ENCODE measurements at regions of chr1 and their contacts with region 1.

Region 1: GRCh38 chr1:167392200-167392696 is 126.1 kb downstream of the CD247 start:
- DNase-seq: no peak
- ATAC-seq: no peak
- H3K4me3 Mint-ChIP-seq: no peak overlapping the region
- H3K27ac Mint-ChIP-seq: no peak overlapping the region
- H3K4me1 Mint-ChIP-seq: no peaks in the 10 kb centered on the region
- H3K27me3 Mint-ChIP-seq: no peaks in the 10 kb centered on the region
- CTCF ChIP-seq: no peak

Region 2: DNA sequence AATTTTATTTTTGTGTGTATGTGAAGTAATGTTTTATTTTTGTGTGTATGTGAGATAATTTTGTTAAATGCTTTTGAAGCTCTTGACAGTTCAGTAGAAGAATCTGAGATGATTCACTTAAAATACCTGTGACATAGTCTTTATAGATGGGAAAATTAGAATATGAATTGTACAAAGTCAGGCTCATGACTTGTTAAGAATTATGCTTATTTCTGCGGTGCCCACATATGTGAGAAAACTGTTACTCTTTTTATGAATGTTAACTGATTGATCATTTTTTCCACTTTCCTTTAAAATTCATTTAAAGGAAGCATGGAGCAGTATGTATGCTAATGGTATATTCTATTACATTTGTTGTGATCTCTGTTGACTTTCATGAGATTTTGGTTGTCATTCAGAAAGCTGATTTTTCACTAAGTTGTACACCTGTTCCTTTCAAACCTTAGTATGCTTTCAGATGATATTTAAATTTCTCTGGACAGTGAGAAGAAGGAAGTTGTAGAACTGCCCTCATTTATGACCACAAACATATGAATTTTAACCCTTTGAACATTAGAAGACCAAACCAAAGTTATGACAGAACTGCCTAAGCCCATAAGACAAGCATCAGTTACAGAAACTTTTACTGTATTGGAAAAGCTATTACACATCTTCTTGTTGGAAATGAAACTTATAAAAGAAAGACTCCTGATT is 61.5 kb before region 1 on chr1:
- CTCF ChIA-PET with region 1: no interaction called
- POLR2A ChIA-PET with region 1: no interaction called
- intact Hi-C with region 1: loop called (anchors 10 kb)
- DNase-seq: no peak
- ATAC-seq: peak; percentile 37
- H3K4me3 Mint-ChIP-seq: no peak overlapping the region
- H3K27ac Mint-ChIP-seq: no peak overlapping the region
- H3K4me1 Mint-ChIP-seq: peaks cover 27% of the 10 kb centered on the region
- H3K27me3 Mint-ChIP-seq: no peaks in the 10 kb centered on the region
- CTCF ChIP-seq: no peak

Region 3: DNA sequence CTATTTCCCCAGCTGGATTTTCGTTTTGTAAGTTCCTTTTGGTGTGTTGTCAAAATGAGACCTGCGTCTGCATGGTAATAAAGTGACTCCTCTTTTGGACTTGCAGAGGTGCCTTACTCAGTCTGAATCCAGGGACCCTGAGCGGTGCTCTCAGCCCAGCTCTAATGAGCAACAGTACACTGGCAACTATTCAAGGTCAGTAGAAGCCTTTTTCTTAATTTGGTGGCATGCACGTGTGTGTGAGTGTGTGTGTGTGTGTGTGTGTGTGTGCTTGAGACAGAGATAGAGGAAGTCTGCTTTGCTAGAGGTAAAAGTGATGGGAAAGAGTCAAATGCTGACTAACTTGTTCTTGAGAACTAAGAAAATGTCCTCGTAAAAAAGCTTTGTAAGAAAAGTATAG is 20.7 kb after region 1 on chr1:
- CTCF ChIA-PET with region 1: no interaction called
- POLR2A ChIA-PET with region 1: no interaction called
- intact Hi-C with region 1: no loop called
- DNase-seq: no peak
- ATAC-seq: no peak
- H3K4me3 Mint-ChIP-seq: no peak overlapping the region
- H3K27ac Mint-ChIP-seq: no peak overlapping the region
- H3K4me1 Mint-ChIP-seq: peaks cover 14% of the 10 kb centered on the region
- H3K27me3 Mint-ChIP-seq: no peaks in the 10 kb centered on the region
- CTCF ChIP-seq: no peak